OCI-LY7 (cell line): ENCODE measurements at regions of chr13 and their contacts with region 1.

Region 1: DNA sequence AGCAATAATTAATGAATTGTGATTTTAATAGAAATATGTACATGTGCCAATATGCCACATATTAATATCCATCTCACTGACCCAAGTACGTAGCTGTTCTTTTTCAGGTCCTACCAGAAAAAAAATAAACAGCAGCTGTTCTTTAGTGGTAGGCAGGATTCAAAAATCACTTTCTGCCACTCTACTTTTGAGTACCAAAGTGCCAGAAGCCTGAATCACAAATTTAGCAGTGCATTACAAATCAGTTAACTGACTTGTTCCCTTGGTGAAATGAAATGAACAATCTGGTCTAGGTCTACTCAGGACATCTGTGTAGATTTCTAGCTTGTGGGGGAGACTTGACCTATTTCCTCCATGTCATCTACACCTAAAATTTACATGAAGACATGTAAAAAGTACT is 775.5 kb upstream of the GPC6 start:
- DNase-seq: no peak
- H3K4me3 ChIP-seq: no peak overlapping the region
- H3K27ac ChIP-seq: no peak overlapping the region
- H3K4me1 ChIP-seq: no peaks in the 10 kb centered on the region
- CTCF ChIP-seq: no peak

Region 2: DNA sequence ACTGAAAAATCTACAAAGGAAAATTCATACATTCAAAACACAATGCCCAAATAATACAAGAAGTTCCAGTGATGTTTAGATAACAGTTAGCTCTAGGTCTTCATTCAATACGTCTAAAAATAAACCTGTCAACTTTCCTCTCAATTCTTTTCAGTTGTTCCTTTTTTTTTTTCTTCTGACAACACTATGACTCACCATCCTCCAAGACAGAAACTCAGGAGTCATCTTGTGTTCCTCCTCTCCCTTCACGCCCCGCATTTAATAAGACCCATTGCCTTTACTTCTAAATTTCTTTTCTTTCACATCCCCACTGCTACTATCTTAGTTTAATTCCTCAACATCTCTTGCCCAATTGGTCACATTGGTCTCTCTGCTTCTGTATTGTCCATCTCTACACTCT is 292.7 kb before region 1 on chr13:
- CTCF ChIA-PET with region 1: no interaction called
- POLR2A ChIA-PET with region 1: no interaction called
- intact Hi-C with region 1: no loop called
- DNase-seq: no peak
- H3K4me3 ChIP-seq: no peak overlapping the region
- H3K27ac ChIP-seq: no peak overlapping the region
- H3K4me1 ChIP-seq: no peaks in the 10 kb centered on the region
- CTCF ChIP-seq: no peak

Region 3: GRCh38 chr13:92433963-92434362 is 17.1 kb before region 1 on chr13:
- CTCF ChIA-PET with region 1: no interaction called
- POLR2A ChIA-PET with region 1: interaction called, 11 read pairs
- intact Hi-C with region 1: no loop called
- DNase-seq: no peak
- H3K4me3 ChIP-seq: no peak overlapping the region
- H3K27ac ChIP-seq: no peak overlapping the region
- H3K4me1 ChIP-seq: no peaks in the 10 kb centered on the region
- CTCF ChIP-seq: no peak

Region 4: DNA sequence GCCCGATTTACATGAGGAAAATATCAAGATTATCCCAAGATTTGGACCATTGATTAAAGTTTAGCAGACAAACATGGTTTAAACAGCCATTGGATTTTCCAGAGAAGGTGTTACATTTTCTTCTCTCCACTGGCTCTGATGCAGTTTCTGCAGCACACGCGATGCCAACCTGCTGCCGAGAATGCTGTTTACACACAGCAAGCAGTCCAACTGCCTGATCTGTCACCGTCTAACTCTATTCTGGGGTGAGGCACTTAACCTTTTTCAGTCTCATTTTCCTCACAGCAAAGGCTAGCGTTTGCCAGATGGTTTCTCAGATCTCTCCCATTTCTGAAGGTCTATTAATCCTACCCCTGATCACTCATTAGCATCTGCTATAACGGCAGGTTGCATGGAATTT is 12.1 kb after region 1 on chr13:
- CTCF ChIA-PET with region 1: no interaction called
- POLR2A ChIA-PET with region 1: interaction called, 15 read pairs
- intact Hi-C with region 1: no loop called
- DNase-seq: no peak
- H3K4me3 ChIP-seq: no peak overlapping the region
- H3K27ac ChIP-seq: no peak overlapping the region
- H3K4me1 ChIP-seq: no peaks in the 10 kb centered on the region
- CTCF ChIP-seq: no peak

Region 5: DNA sequence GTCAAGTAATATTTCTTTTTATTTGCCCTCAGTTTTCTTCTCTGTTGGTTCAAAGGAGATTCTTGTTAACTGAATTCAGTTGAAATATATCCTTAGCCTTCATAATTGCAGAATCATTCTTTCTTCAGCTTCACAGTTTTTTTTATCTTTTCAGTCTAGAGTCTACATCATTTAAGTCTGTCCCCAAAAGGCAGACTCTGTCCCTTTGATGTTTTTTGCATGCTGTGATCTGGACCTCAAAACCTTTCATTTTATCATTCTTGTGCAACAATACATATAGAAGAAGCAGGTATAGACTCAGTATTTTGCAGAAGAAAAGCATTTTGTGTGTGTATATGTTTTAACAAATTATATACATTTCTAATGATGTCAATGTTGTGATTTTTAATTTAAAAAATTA is 40.8 kb after region 1 on chr13:
- CTCF ChIA-PET with region 1: no interaction called
- POLR2A ChIA-PET with region 1: no interaction called
- intact Hi-C with region 1: no loop called
- DNase-seq: no peak
- H3K4me3 ChIP-seq: no peak overlapping the region
- H3K27ac ChIP-seq: no peak overlapping the region
- H3K4me1 ChIP-seq: no peaks in the 10 kb centered on the region
- CTCF ChIP-seq: no peak